Caco-2 (cell line): ENCODE measurements at regions of chrX and their contacts with region 1.

Region 1: GRCh38 chrX:112851806-112852205 is 11.2 kb upstream of the AMOT start:
- DNase-seq: no peak
- H3K4me3 ChIP-seq: no peak overlapping the region
- H3K4me3 Mint-ChIP-seq: peak overlapping the region; percentile 47
- H3K27ac Mint-ChIP-seq: peak overlapping the region; percentile 64
- H3K4me1 ChIP-seq: peaks cover 23% of the 10 kb centered on the region
- H3K4me1 Mint-ChIP-seq: peaks cover 39% of the 10 kb centered on the region
- H3K27me3 ChIP-seq: no peaks in the 10 kb centered on the region
- H3K27me3 Mint-ChIP-seq: no peaks in the 10 kb centered on the region
- CTCF ChIP-seq: no peak

Region 2: DNA sequence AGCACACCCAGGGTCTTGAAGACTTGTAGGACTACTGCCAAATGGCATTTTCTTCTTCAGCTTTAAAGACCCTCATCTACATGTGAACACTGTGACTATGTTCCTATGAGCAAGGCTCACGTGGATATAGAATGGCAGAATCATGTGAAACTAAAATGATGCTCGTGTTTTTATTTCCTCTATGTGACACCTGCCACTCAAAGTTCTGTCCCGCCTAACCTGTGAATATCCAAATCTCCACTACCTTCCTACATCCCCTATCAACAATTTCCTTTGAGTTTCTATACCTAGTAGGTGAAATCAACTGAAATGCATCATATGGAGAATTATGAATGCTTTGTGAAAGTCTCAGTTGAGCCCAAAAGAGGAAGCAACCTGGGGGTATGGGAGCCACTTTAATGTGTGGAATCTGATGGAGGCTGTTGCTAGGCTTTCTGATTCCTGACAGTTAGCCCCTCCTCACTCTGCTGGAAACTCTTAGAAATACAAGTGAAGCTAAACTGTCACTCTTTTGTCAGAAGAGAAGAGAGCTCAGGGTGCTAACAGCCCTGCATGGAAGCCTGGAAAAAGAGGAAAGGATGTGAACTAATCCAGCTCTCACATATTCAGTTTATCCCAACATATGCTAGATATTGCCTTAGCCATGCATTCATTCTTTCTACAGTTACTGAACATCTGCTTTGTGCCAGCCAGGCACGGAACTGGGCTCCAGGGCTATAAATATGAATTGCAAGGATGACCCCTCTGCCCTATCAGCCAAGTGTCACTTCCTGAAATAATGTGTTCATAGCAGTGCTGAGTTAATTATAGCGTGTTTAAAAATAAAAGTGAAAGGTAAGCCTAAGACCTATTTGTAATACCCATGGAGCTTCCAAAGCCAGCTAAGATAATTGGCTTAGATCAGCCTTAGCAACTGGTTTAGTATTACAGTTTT is 183.1 kb before region 1 on chrX:
- CTCF ChIA-PET with region 1: no interaction called
- POLR2A ChIA-PET with region 1: no interaction called
- intact Hi-C with region 1: no loop called
- DNase-seq: no peak
- H3K4me3 ChIP-seq: no peak overlapping the region
- H3K4me3 Mint-ChIP-seq: no peak overlapping the region
- H3K27ac Mint-ChIP-seq: no peak overlapping the region
- H3K4me1 ChIP-seq: no peaks in the 10 kb centered on the region
- H3K4me1 Mint-ChIP-seq: no peaks in the 10 kb centered on the region
- H3K27me3 ChIP-seq: no peaks in the 10 kb centered on the region
- H3K27me3 Mint-ChIP-seq: peaks cover 3% of the 10 kb centered on the region
- CTCF ChIP-seq: no peak

Region 3: GRCh38 chrX:112784692-112785091 is 67.1 kb before region 1 on chrX:
- CTCF ChIA-PET with region 1: no interaction called
- POLR2A ChIA-PET with region 1: no interaction called
- intact Hi-C with region 1: loop called (anchors 2 kb)
- DNase-seq: no peak
- H3K4me3 ChIP-seq: no peak overlapping the region
- H3K4me3 Mint-ChIP-seq: no peak overlapping the region
- H3K27ac Mint-ChIP-seq: peak overlapping the region; percentile 50
- H3K4me1 ChIP-seq: peaks cover 20% of the 10 kb centered on the region
- H3K4me1 Mint-ChIP-seq: peaks cover 19% of the 10 kb centered on the region
- H3K27me3 ChIP-seq: no peaks in the 10 kb centered on the region
- H3K27me3 Mint-ChIP-seq: no peaks in the 10 kb centered on the region
- CTCF ChIP-seq: no peak

Region 4: GRCh38 chrX:112841114-112841819 is 10.5 kb before region 1 on chrX:
- CTCF ChIA-PET with region 1: interaction called, 3 read pairs
- POLR2A ChIA-PET with region 1: interaction called, 8 read pairs
- intact Hi-C with region 1: loop called (anchors 1 kb)
- DNase-seq: peak; percentile 86
- H3K4me3 ChIP-seq: peak overlapping the region; percentile 68
- H3K4me3 Mint-ChIP-seq: peak overlapping the region; percentile 96
- H3K27ac Mint-ChIP-seq: peak overlapping the region; percentile 91
- H3K4me1 ChIP-seq: peaks cover 25% of the 10 kb centered on the region
- H3K4me1 Mint-ChIP-seq: peaks cover 16% of the 10 kb centered on the region
- H3K27me3 ChIP-seq: no peaks in the 10 kb centered on the region
- H3K27me3 Mint-ChIP-seq: no peaks in the 10 kb centered on the region
- CTCF ChIP-seq: no peak